CD8-positive, alpha-beta T cell (primary cell): ENCODE measurements at regions of chr19 and their contacts with region 1.

Region 1: GRCh38 chr19:45717166-45717982 is 13.3 kb downstream of the FBXO46 start:
- DNase-seq: peak; percentile 96 to 99 (median 97)
- ATAC-seq: peak; percentile 95
- H3K4me3 ChIP-seq: peak overlapping the region; percentile 60 to 85
- H3K4me3 Mint-ChIP-seq: peak overlapping the region; percentile 97
- H3K27ac ChIP-seq: peak overlapping the region; percentile 73 to 95
- H3K27ac Mint-ChIP-seq: peak overlapping the region; percentile 97
- H3K4me1 ChIP-seq: peaks cover 21% of the 10 kb centered on the region
- H3K4me1 Mint-ChIP-seq: peaks cover 44% of the 10 kb centered on the region
- H3K27me3 ChIP-seq: no peaks in the 10 kb centered on the region
- H3K27me3 Mint-ChIP-seq: no peaks in the 10 kb centered on the region
- CTCF ChIP-seq: no peak

Region 2: DNA sequence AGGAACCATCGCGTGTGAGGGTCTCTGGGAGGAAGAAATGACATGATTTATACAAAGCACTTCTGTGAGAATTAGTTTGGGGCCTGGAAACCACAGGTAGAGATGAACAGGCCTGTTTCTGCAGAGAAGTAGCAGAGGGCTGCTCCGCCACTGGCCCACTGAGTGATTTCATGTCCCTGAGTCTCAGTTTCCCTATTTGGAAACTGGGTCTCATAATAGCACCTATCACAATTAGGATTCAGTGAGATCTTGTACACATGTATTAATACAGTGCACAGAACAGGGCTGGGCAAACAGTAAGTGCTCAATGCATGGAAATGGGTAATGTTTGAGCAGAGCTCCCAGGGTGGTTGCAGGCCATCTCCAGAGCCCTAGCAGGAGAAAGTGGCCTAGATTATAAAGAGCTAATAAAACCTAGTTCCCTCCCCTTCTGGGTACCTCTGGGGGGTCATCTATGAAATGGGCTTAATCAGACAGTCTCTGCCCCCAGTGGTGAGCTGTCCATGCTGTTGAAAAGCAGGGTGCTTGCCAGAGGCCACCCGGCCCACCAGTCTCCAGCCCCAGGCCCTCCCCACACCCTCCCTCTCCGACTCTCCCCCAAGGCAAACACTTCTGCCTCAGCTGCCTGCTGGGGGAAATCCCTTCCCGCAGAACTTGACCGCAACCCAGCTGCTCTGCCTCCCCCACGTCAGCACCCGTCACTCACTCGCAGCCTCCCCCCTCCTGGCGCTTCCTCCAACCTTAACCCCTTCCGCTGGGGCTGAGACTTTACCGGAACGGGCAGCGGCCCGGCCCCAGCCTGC is 964.4 kb before region 1 on chr19:
- CTCF ChIA-PET with region 1: no interaction called
- POLR2A ChIA-PET with region 1: no interaction called
- intact Hi-C with region 1: loop called in 1 of 2 experiments (anchors 5 kb)
- DNase-seq: peak; percentile 88 to 99 (median 93)
- ATAC-seq: peak; percentile 76
- H3K4me3 ChIP-seq: peak overlapping the region; percentile 13 to 68
- H3K4me3 Mint-ChIP-seq: peak overlapping the region; percentile 95
- H3K27ac ChIP-seq: peak overlapping the region; percentile 83 to 95
- H3K27ac Mint-ChIP-seq: peak overlapping the region; percentile 97
- H3K4me1 ChIP-seq: peaks cover 64% of the 10 kb centered on the region
- H3K4me1 Mint-ChIP-seq: peaks cover 65% of the 10 kb centered on the region
- H3K27me3 ChIP-seq: no peaks in the 10 kb centered on the region
- H3K27me3 Mint-ChIP-seq: no peaks in the 10 kb centered on the region
- CTCF ChIP-seq: no peak

Region 3: GRCh38 chr19:45506246-45506990 is 211.0 kb before region 1 on chr19:
- CTCF ChIA-PET with region 1: no interaction called
- POLR2A ChIA-PET with region 1: no interaction called
- intact Hi-C with region 1: loop called in 1 of 2 experiments (anchors 2 kb)
- DNase-seq: peak; percentile 93 to 99 (median 97)
- ATAC-seq: peak; percentile 79
- H3K4me3 ChIP-seq: peak overlapping the region; percentile 74 to 90
- H3K4me3 Mint-ChIP-seq: peak overlapping the region; percentile 88
- H3K27ac ChIP-seq: peak overlapping the region; percentile 85 to 91
- H3K27ac Mint-ChIP-seq: peak overlapping the region; percentile 93
- H3K4me1 ChIP-seq: peaks cover 33% of the 10 kb centered on the region
- H3K4me1 Mint-ChIP-seq: peaks cover 39% of the 10 kb centered on the region
- H3K27me3 ChIP-seq: no peaks in the 10 kb centered on the region
- H3K27me3 Mint-ChIP-seq: no peaks in the 10 kb centered on the region
- CTCF ChIP-seq: peak; percentile 32

Region 4: GRCh38 chr19:45539459-45539858 is 177.9 kb before region 1 on chr19:
- CTCF ChIA-PET with region 1: no interaction called
- POLR2A ChIA-PET with region 1: no interaction called
- intact Hi-C with region 1: no loop called
- DNase-seq: no peak
- ATAC-seq: no peak
- H3K4me3 ChIP-seq: no peak overlapping the region
- H3K4me3 Mint-ChIP-seq: no peak overlapping the region
- H3K27ac ChIP-seq: no peak overlapping the region
- H3K27ac Mint-ChIP-seq: no peak overlapping the region
- H3K4me1 ChIP-seq: no peaks in the 10 kb centered on the region
- H3K4me1 Mint-ChIP-seq: no peaks in the 10 kb centered on the region
- H3K27me3 ChIP-seq: no peaks in the 10 kb centered on the region
- H3K27me3 Mint-ChIP-seq: no peaks in the 10 kb centered on the region
- CTCF ChIP-seq: no peak

Region 5: GRCh38 chr19:45705115-45705514 is 12.3 kb before region 1 on chr19:
- CTCF ChIA-PET with region 1: no interaction called
- POLR2A ChIA-PET with region 1: interaction called, 14 read pairs
- intact Hi-C with region 1: no loop called
- DNase-seq: no peak
- ATAC-seq: no peak
- H3K4me3 ChIP-seq: no peak overlapping the region
- H3K4me3 Mint-ChIP-seq: no peak overlapping the region
- H3K27ac ChIP-seq: no peak overlapping the region
- H3K27ac Mint-ChIP-seq: peak overlapping the region; percentile 57
- H3K4me1 ChIP-seq: peaks cover 8% of the 10 kb centered on the region
- H3K4me1 Mint-ChIP-seq: peaks cover 7% of the 10 kb centered on the region
- H3K27me3 ChIP-seq: no peaks in the 10 kb centered on the region
- H3K27me3 Mint-ChIP-seq: no peaks in the 10 kb centered on the region
- CTCF ChIP-seq: no peak

Region 6: GRCh38 chr19:45770192-45771101 is 53.1 kb after region 1 on chr19:
- CTCF ChIA-PET with region 1: interaction called, 3 read pairs
- POLR2A ChIA-PET with region 1: interaction called, 15 read pairs
- intact Hi-C with region 1: loop called in 1 of 2 experiments (anchors 1 kb)
- DNase-seq: peak; percentile 79 to 94 (median 92)
- ATAC-seq: peak; percentile 74
- H3K4me3 ChIP-seq: peak overlapping the region; percentile 90 to 99
- H3K4me3 Mint-ChIP-seq: peak overlapping the region; percentile 84
- H3K27ac ChIP-seq: peak overlapping the region in 1 of 2 experiments; percentile 77
- H3K27ac Mint-ChIP-seq: peak overlapping the region; percentile 85
- H3K4me1 ChIP-seq: peaks cover 22% of the 10 kb centered on the region
- H3K4me1 Mint-ChIP-seq: peaks cover 24% of the 10 kb centered on the region
- H3K27me3 ChIP-seq: peaks cover 0 to 6% of the 10 kb centered on the region in 2 experiments
- H3K27me3 Mint-ChIP-seq: peaks cover 7% of the 10 kb centered on the region
- CTCF ChIP-seq: peak; percentile 99

Region 7: GRCh38 chr19:45886427-45887199 is 169.2 kb after region 1 on chr19:
- CTCF ChIA-PET with region 1: no interaction called
- POLR2A ChIA-PET with region 1: interaction called, 3 read pairs
- intact Hi-C with region 1: loop called (anchors 1 kb)
- DNase-seq: peak; percentile 81 to 96 (median 89)
- ATAC-seq: peak; percentile 69
- H3K4me3 ChIP-seq: peak overlapping the region; percentile 77 to 87
- H3K4me3 Mint-ChIP-seq: peak overlapping the region; percentile 98
- H3K27ac ChIP-seq: peak overlapping the region; percentile 69 to 92
- H3K27ac Mint-ChIP-seq: peak overlapping the region; percentile 97
- H3K4me1 ChIP-seq: peaks cover 41% of the 10 kb centered on the region
- H3K4me1 Mint-ChIP-seq: peaks cover 24% of the 10 kb centered on the region
- H3K27me3 ChIP-seq: no peaks in the 10 kb centered on the region
- H3K27me3 Mint-ChIP-seq: no peaks in the 10 kb centered on the region
- CTCF ChIP-seq: no peak

Region 8: GRCh38 chr19:45994989-45995714 is 277.8 kb after region 1 on chr19 and contains the start of gene CCDC61:
- CTCF ChIA-PET with region 1: no interaction called
- POLR2A ChIA-PET with region 1: no interaction called
- intact Hi-C with region 1: loop called in 1 of 2 experiments (anchors 1 kb)
- DNase-seq: peak; percentile 92 to 99 (median 95)
- ATAC-seq: peak; percentile 95
- H3K4me3 ChIP-seq: peak within 1 kb of the TSS; percentile 73 to 77
- H3K4me3 Mint-ChIP-seq: no peak within 1 kb of the TSS
- H3K27ac ChIP-seq: peak within 1 kb of the TSS; percentile 64 to 74
- H3K27ac Mint-ChIP-seq: no peak within 1 kb of the TSS
- H3K4me1 ChIP-seq: peaks cover 16% of the 10 kb centered on the region
- H3K4me1 Mint-ChIP-seq: peaks cover 25% of the 10 kb centered on the region
- H3K27me3 ChIP-seq: no peaks in the 10 kb centered on the region
- H3K27me3 Mint-ChIP-seq: peaks cover 7% of the 10 kb centered on the region
- CTCF ChIP-seq: no peak
- total RNA-seq, gene CCDC61: 4.9 to 6.2 TPM